ENCODE measurements at regions of chr2 and their contacts with region 1.

Region 1: GRCh38 chr2:28894470-28895177 is at the start of gene WDR43:
- DNase-seq: peak; percentile 99
- ATAC-seq: peak; percentile 86
- H3K4me3 ChIP-seq: peak within 1 kb of the TSS; percentile 92
- H3K27ac ChIP-seq: peak within 1 kb of the TSS; percentile 71
- H3K4me1 ChIP-seq: peaks cover 24% of the 10 kb centered on the region
- H3K27me3 ChIP-seq: no peaks in the 10 kb centered on the region
- CTCF ChIP-seq: no peak
- total RNA-seq, gene WDR43: 89.4 and 134 TPM in 2 replicates

Region 2: GRCh38 chr2:28870146-28870891 is 24.3 kb before region 1 on chr2 and contains the start of gene TRMT61B:
- CTCF ChIA-PET with region 1: interaction called, 3 read pairs
- POLR2A ChIA-PET with region 1: interaction called, 6 read pairs
- intact Hi-C with region 1: loop called (anchors 1 kb)
- DNase-seq: peak; percentile 96
- ATAC-seq: peak; percentile 99
- H3K4me3 ChIP-seq: peak within 1 kb of the TSS; percentile 87
- H3K27ac ChIP-seq: peak within 1 kb of the TSS; percentile 14
- H3K4me1 ChIP-seq: peaks cover 16% of the 10 kb centered on the region
- H3K27me3 ChIP-seq: peaks cover 2% of the 10 kb centered on the region; the same call in 1 of the 2 replicates
- CTCF ChIP-seq: no peak
- total RNA-seq, gene TRMT61B: 19.8 and 21.7 TPM in 2 replicates